ENCODE measurements at regions of chr10 and their contacts with region 1.

Region 1: GRCh38 chr10:98425511-98426352 is 10.8 kb upstream of the PYROXD2 start:
- DNase-seq: peak; percentile 55
- H3K4me3 Mint-ChIP-seq: no peak overlapping the region
- H3K27ac Mint-ChIP-seq: no peak overlapping the region
- H3K4me1 Mint-ChIP-seq: no peaks in the 10 kb centered on the region
- H3K27me3 Mint-ChIP-seq: no peaks in the 10 kb centered on the region
- CTCF ChIP-seq: peak; percentile 71

Region 2: GRCh38 chr10:97861097-97861750 is 564.5 kb before region 1 on chr10:
- CTCF ChIA-PET with region 1: no interaction called
- POLR2A ChIA-PET with region 1: no interaction called
- intact Hi-C with region 1: no loop called
- DNase-seq: peak; percentile 86
- H3K4me3 Mint-ChIP-seq: no peak overlapping the region
- H3K27ac Mint-ChIP-seq: no peak overlapping the region
- H3K4me1 Mint-ChIP-seq: peaks cover 11% of the 10 kb centered on the region
- H3K27me3 Mint-ChIP-seq: peaks cover 16% of the 10 kb centered on the region
- CTCF ChIP-seq: no peak

Region 3: GRCh38 chr10:98299341-98299740 is 126.4 kb before region 1 on chr10:
- CTCF ChIA-PET with region 1: no interaction called
- POLR2A ChIA-PET with region 1: no interaction called
- intact Hi-C with region 1: no loop called
- DNase-seq: peak; percentile 22
- H3K4me3 Mint-ChIP-seq: no peak overlapping the region
- H3K27ac Mint-ChIP-seq: no peak overlapping the region
- H3K4me1 Mint-ChIP-seq: peaks cover 13% of the 10 kb centered on the region
- H3K27me3 Mint-ChIP-seq: peaks cover 39% of the 10 kb centered on the region
- CTCF ChIP-seq: no peak

Region 4: GRCh38 chr10:98446661-98447221 is 21.0 kb after region 1 on chr10 and contains the start of gene HPS1:
- CTCF ChIA-PET with region 1: interaction called, 25 read pairs
- POLR2A ChIA-PET with region 1: interaction called, 4 read pairs
- intact Hi-C with region 1: no loop called
- DNase-seq: peak; percentile 57
- H3K4me3 Mint-ChIP-seq: peak within 1 kb of the TSS; percentile 88
- H3K27ac Mint-ChIP-seq: peak within 1 kb of the TSS; percentile 76
- H3K4me1 Mint-ChIP-seq: peaks cover 16% of the 10 kb centered on the region
- H3K27me3 Mint-ChIP-seq: peaks cover 18% of the 10 kb centered on the region
- CTCF ChIP-seq: no peak
- total RNA-seq, gene HPS1: 40.5 and 41.8 TPM in 2 replicates